ENCODE measurements at regions of chr1 and their contacts with region 1.

Region 1: DNA sequence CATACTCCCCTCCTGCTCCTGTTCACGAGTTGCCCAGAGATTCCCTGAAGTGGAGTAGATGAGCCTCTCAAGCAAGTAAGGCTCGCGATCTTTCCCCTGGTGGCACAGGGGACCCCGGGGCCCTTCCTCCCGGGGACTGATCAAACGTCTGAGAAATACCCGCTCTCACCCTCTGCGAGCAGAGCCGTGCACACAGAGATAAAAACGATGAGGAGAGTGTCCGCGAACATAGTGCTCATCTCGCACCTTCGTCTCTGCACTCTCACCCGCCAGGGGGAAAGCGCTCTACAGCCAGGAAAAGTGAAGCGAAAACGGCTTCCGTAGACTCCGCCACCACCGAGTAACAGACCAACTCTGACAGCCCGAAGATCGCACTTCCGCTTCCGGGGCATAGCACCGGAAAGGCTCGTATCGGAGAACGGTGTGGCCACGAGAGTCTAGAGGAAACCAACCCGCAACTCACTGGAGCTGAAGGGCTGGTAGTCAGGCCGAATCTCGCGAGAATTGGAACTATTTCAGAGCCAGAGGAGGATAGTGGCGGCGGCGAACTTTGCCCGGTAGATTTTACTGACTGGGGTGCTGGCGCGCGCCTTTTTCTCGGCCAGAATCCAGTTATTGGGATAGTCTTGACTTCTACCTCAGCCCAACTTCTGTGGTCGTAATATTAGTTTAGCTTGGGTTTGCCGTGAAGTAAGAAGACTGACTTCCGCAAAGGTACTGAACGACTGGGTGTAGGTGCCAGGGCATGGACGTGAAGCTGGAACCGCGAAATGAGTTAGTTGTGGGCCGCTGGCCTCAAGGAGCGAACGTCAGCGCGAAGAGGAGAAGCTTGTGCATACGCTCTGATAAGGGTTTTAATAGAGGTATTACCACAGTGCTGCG is at the start of gene TMCO1:
- DNase-seq: peak; percentile 97
- H3K4me3 Mint-ChIP-seq: peak within 1 kb of the TSS; percentile 98
- H3K27ac Mint-ChIP-seq: peak within 1 kb of the TSS; percentile 99
- H3K4me1 Mint-ChIP-seq: peaks cover 55% of the 10 kb centered on the region
- H3K27me3 Mint-ChIP-seq: no peaks in the 10 kb centered on the region
- total RNA-seq, gene TMCO1: 113 to 115 TPM

Region 2: GRCh38 chr1:165697881-165698760 is 70.6 kb before region 1 on chr1 and contains the start of gene ALDH9A1:
- CTCF ChIA-PET with region 1: interaction called, 12 read pairs
- POLR2A ChIA-PET with region 1: interaction called, 30 read pairs
- DNase-seq: peak; percentile 91
- H3K4me3 Mint-ChIP-seq: peak within 1 kb of the TSS; percentile 97
- H3K27ac Mint-ChIP-seq: peak within 1 kb of the TSS; percentile 98
- H3K4me1 Mint-ChIP-seq: peaks cover 35% of the 10 kb centered on the region
- H3K27me3 Mint-ChIP-seq: peaks cover 1% of the 10 kb centered on the region
- total RNA-seq, gene ALDH9A1: 46.9 to 54.4 TPM

Region 3: GRCh38 chr1:165827268-165828102 is 58.7 kb after region 1 on chr1 and contains the start of gene UCK2:
- CTCF ChIA-PET with region 1: interaction called, 5 read pairs
- POLR2A ChIA-PET with region 1: interaction called, 60 read pairs
- DNase-seq: peak; percentile 63
- H3K4me3 Mint-ChIP-seq: peak within 1 kb of the TSS; percentile 90
- H3K27ac Mint-ChIP-seq: peak within 1 kb of the TSS; percentile 83
- H3K4me1 Mint-ChIP-seq: peaks cover 26% of the 10 kb centered on the region
- H3K27me3 Mint-ChIP-seq: no peaks in the 10 kb centered on the region
- total RNA-seq, gene UCK2: 32.1 to 34.4 TPM

Region 4: DNA sequence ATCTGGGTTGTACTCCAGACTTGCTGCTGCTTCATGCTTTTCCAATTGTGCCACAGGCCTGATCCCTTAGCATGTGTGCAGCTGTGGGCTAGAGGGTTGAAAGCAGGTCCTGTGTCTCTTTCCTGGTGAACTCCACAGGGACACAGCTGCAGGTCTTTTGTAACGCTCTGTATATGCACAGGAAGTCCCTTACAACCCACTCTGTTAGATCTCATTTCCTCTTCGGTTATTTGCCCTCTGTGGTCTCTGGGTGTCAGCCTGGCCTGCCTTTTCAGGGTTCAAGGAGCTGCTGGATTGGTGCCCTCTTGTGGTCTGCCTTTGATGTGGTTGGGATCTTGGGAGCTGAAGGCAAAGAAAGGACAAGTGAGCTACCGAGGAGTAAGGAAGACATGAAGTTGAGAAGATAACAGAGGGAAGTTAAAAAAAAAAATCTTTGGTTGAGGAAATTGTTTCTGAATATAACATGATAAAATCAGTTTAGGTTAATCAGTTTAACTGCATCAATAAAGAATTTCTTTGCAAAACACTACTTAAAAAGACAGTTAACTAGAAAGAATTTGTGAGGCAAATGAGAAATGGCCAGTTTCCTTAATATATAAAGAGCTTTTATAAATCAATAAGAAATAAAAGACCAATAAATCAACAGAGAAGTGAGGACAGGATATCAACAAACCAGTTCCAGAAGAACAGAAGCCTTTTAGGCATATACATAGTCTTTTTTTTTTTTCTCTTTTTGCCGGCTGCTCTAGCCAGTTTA is 102.7 kb after region 1 on chr1:
- CTCF ChIA-PET with region 1: interaction called, 12 read pairs
- POLR2A ChIA-PET with region 1: interaction called, 21 read pairs
- DNase-seq: peak; percentile 78
- H3K4me3 Mint-ChIP-seq: no peak overlapping the region
- H3K27ac Mint-ChIP-seq: peak overlapping the region; percentile 65
- H3K4me1 Mint-ChIP-seq: peaks cover 40% of the 10 kb centered on the region
- H3K27me3 Mint-ChIP-seq: no peaks in the 10 kb centered on the region

Region 5: DNA sequence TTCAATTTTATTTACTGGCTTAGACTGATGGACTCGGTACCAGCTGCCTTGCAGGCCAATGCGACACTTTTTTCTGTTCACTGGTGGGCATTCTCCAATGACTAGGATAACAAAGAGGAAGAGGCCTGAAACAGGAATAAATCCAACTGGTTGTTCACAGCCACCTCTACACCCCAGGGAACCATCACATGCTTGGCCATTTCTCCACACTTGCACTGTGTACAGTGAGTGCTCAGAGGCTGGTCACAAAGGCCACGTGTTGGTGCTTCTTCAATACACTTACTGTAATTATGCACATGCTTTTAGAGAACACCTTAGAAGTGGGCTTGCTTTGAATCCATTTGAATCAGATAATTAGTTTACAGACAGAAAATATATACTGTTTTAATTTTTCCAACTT is 284.6 kb after region 1 on chr1:
- CTCF ChIA-PET with region 1: no interaction called
- POLR2A ChIA-PET with region 1: no interaction called
- DNase-seq: no peak
- H3K4me3 Mint-ChIP-seq: no peak overlapping the region
- H3K27ac Mint-ChIP-seq: no peak overlapping the region
- H3K4me1 Mint-ChIP-seq: no peaks in the 10 kb centered on the region
- H3K27me3 Mint-ChIP-seq: peaks cover 5% of the 10 kb centered on the region

Measured in activated CD4-positive, alpha-beta memory T cell treated with anti-CD3 and anti-CD28 coated beads, Interleukin-2, amount 10 ng/mL, durations not matched to agents 7 days and 5 days (primary cell).